ENCODE measurements at regions of chr20 and their contacts with region 1.

Region 1: DNA sequence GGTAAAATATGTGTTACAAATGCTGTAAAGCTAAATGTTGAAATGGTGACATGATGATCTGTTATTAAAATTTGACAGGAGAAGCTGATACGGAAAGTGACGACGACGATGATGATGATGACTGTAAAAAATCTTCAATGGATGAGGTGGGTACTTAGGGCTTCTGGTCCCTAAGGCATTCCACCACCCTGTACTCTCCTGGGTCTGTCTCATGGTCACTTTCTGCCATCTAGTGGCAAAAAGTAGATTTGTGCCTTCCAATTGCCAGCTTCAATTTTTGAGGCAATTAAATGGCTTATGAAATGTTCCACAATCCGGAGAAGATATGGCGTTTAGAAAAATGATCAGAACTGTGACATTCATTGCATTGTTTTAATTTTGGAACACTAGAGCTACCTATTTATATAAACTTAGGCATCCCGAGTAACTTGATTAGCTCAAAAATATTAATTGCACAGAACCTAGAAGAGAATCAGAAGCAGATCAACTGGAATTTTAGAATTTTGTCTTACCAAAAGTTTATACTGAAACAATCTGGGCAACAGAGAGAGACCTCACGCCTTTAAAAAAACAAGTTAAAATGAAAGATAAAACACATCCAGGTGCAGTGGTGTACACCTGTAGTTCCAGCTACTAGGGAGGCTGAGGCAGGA is 346.5 kb upstream of the PLCB4 start:
- DNase-seq: peak; percentile 62 to 70
- H3K4me3 ChIP-seq: no peak overlapping the region
- H3K4me3 Mint-ChIP-seq: no peak overlapping the region
- H3K27ac Mint-ChIP-seq: no peak overlapping the region
- H3K4me1 ChIP-seq: no peaks in the 10 kb centered on the region
- H3K4me1 Mint-ChIP-seq: no peaks in the 10 kb centered on the region
- H3K27me3 ChIP-seq: no peaks in the 10 kb centered on the region
- H3K27me3 Mint-ChIP-seq: no peaks in the 10 kb centered on the region
- CTCF ChIP-seq: peak; percentile 68 to 77

Region 2: DNA sequence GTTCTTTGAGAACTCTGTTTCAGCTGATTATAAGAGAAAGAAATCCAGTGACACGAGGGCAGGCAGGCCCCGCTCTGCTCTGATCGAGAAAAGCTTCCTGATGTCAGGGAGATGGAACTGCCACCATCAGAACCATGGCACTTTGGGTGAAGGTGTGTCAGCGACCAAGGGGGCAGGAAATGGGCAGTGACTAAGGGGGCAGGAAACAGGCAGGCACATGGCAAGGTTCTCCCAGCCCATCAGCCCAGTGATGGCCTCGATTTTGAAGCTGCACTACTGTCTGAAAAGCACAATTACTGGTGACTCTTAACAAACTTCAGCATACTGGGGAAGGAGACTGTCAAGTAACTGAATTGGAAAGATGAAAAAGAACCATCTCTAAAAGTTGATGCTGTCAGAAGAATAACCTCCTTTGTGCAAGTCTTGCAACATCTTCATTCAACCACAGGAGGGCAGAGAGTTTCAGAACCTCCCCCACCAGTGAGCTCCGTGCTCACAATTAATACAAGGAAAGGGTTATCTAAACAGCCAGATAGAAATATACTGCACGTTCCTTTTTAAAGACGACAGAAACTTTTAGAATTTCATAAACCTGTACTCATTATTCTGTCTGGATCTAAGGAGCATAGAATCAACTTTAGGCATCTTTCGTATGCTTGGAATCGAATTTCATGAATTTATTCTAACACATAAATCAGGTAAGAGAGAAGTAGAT is 741.9 kb before region 1 on chr20:
- CTCF ChIA-PET with region 1: interaction called, 11 read pairs
- POLR2A ChIA-PET with region 1: no interaction called
- intact Hi-C with region 1: loop called (anchors 1 kb)
- DNase-seq: peak; percentile 41 to 46
- H3K4me3 ChIP-seq: no peak overlapping the region
- H3K4me3 Mint-ChIP-seq: no peak overlapping the region
- H3K27ac Mint-ChIP-seq: no peak overlapping the region
- H3K4me1 ChIP-seq: peaks cover 10% of the 10 kb centered on the region
- H3K4me1 Mint-ChIP-seq: no peaks in the 10 kb centered on the region
- H3K27me3 ChIP-seq: no peaks in the 10 kb centered on the region
- H3K27me3 Mint-ChIP-seq: no peaks in the 10 kb centered on the region
- CTCF ChIP-seq: peak; percentile 42 to 74

Region 3: GRCh38 chr20:8305449-8305978 is 416.9 kb before region 1 on chr20:
- CTCF ChIA-PET with region 1: no interaction called
- POLR2A ChIA-PET with region 1: no interaction called
- intact Hi-C with region 1: loop called (anchors 1 kb)
- DNase-seq: peak; percentile 79 to 80
- H3K4me3 ChIP-seq: no peak overlapping the region
- H3K4me3 Mint-ChIP-seq: no peak overlapping the region
- H3K27ac Mint-ChIP-seq: no peak overlapping the region
- H3K4me1 ChIP-seq: no peaks in the 10 kb centered on the region
- H3K4me1 Mint-ChIP-seq: no peaks in the 10 kb centered on the region
- H3K27me3 ChIP-seq: no peaks in the 10 kb centered on the region
- H3K27me3 Mint-ChIP-seq: no peaks in the 10 kb centered on the region
- CTCF ChIP-seq: peak; percentile 74 to 75

Region 4: GRCh38 chr20:8454137-8454712 is 268.2 kb before region 1 on chr20:
- CTCF ChIA-PET with region 1: no interaction called
- POLR2A ChIA-PET with region 1: no interaction called
- intact Hi-C with region 1: loop called (anchors 5 kb)
- DNase-seq: peak in 1 of 2 experiments; percentile 33
- H3K4me3 ChIP-seq: no peak overlapping the region
- H3K4me3 Mint-ChIP-seq: no peak overlapping the region
- H3K27ac Mint-ChIP-seq: no peak overlapping the region
- H3K4me1 ChIP-seq: no peaks in the 10 kb centered on the region
- H3K4me1 Mint-ChIP-seq: no peaks in the 10 kb centered on the region
- H3K27me3 ChIP-seq: no peaks in the 10 kb centered on the region
- H3K27me3 Mint-ChIP-seq: no peaks in the 10 kb centered on the region
- CTCF ChIP-seq: peak; percentile 44 to 59

Region 5: DNA sequence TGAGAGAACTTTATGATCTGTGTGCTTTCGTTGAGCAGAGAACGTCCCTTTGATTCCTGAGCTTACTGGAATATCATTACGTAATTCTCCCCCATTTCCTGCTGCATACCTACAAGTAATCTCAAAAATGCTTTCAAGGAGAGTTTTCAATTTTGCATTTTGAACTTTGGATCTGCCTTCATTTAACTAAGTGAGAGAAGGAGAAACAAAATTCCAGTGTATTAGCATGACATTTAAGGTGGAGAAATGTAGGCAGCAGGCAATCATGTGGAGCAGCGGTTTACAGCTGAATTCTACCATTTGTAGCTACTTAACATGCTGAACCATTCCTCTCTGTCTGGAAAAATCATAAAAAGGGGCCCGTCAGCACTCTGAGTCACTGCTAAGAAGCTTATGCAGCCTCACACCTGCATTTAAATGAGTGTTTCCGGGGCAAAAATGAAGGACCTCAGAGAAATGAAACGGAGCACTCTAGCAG is 138.8 kb before region 1 on chr20:
- CTCF ChIA-PET with region 1: no interaction called
- POLR2A ChIA-PET with region 1: no interaction called
- intact Hi-C with region 1: loop called (anchors 5 kb)
- DNase-seq: peak; percentile 66 to 70
- H3K4me3 ChIP-seq: peak overlapping the region; percentile 5; the same call in 1 of the 2 replicates
- H3K4me3 Mint-ChIP-seq: peak overlapping the region; percentile 38
- H3K27ac Mint-ChIP-seq: peak overlapping the region; percentile 71
- H3K4me1 ChIP-seq: peaks cover 17% of the 10 kb centered on the region
- H3K4me1 Mint-ChIP-seq: peaks cover 16% of the 10 kb centered on the region
- H3K27me3 ChIP-seq: no peaks in the 10 kb centered on the region
- H3K27me3 Mint-ChIP-seq: no peaks in the 10 kb centered on the region
- CTCF ChIP-seq: no peak

Region 6: DNA sequence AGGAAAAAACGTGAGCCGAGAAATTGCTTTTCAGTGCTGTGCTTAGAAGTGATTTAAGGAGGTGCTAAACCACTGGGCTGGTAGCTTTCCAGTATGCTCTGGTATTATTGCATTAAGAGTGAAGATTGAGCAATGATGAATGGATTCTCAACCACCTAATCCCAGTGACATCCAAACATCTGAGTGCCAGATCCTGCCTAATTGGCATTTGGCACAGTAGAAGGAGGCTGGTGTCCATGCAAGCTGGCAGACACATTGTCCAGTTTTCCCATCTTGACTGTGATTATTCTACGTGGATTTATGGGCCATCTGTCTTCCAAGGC is 51.5 kb before region 1 on chr20:
- CTCF ChIA-PET with region 1: no interaction called
- POLR2A ChIA-PET with region 1: no interaction called
- intact Hi-C with region 1: no loop called
- DNase-seq: no peak
- H3K4me3 ChIP-seq: no peak overlapping the region
- H3K4me3 Mint-ChIP-seq: no peak overlapping the region
- H3K27ac Mint-ChIP-seq: no peak overlapping the region
- H3K4me1 ChIP-seq: peaks cover 7% of the 10 kb centered on the region; the same call in 1 of the 2 replicates
- H3K4me1 Mint-ChIP-seq: peaks cover 12% of the 10 kb centered on the region
- H3K27me3 ChIP-seq: no peaks in the 10 kb centered on the region
- H3K27me3 Mint-ChIP-seq: no peaks in the 10 kb centered on the region
- CTCF ChIP-seq: no peak

Region 7: GRCh38 chr20:8690074-8690473 is 32.3 kb before region 1 on chr20:
- CTCF ChIA-PET with region 1: no interaction called
- POLR2A ChIA-PET with region 1: no interaction called
- intact Hi-C with region 1: no loop called
- DNase-seq: no peak
- H3K4me3 ChIP-seq: no peak overlapping the region
- H3K4me3 Mint-ChIP-seq: no peak overlapping the region
- H3K27ac Mint-ChIP-seq: no peak overlapping the region
- H3K4me1 ChIP-seq: no peaks in the 10 kb centered on the region
- H3K4me1 Mint-ChIP-seq: no peaks in the 10 kb centered on the region
- H3K27me3 ChIP-seq: no peaks in the 10 kb centered on the region
- H3K27me3 Mint-ChIP-seq: no peaks in the 10 kb centered on the region
- CTCF ChIP-seq: no peak

Region 8: GRCh38 chr20:8829256-8829655 is 106.9 kb after region 1 on chr20:
- CTCF ChIA-PET with region 1: no interaction called
- POLR2A ChIA-PET with region 1: no interaction called
- intact Hi-C with region 1: no loop called
- DNase-seq: no peak
- H3K4me3 ChIP-seq: no peak overlapping the region
- H3K4me3 Mint-ChIP-seq: no peak overlapping the region
- H3K27ac Mint-ChIP-seq: no peak overlapping the region
- H3K4me1 ChIP-seq: peaks cover 4% of the 10 kb centered on the region; the same call in 1 of the 2 replicates
- H3K4me1 Mint-ChIP-seq: no peaks in the 10 kb centered on the region
- H3K27me3 ChIP-seq: no peaks in the 10 kb centered on the region
- H3K27me3 Mint-ChIP-seq: no peaks in the 10 kb centered on the region
- CTCF ChIP-seq: peak; percentile 34

Measured in Caco-2 (cell line).